K562 (cell line): ENCODE measurements at regions of chr21 and their contacts with region 1.

Region 1: DNA sequence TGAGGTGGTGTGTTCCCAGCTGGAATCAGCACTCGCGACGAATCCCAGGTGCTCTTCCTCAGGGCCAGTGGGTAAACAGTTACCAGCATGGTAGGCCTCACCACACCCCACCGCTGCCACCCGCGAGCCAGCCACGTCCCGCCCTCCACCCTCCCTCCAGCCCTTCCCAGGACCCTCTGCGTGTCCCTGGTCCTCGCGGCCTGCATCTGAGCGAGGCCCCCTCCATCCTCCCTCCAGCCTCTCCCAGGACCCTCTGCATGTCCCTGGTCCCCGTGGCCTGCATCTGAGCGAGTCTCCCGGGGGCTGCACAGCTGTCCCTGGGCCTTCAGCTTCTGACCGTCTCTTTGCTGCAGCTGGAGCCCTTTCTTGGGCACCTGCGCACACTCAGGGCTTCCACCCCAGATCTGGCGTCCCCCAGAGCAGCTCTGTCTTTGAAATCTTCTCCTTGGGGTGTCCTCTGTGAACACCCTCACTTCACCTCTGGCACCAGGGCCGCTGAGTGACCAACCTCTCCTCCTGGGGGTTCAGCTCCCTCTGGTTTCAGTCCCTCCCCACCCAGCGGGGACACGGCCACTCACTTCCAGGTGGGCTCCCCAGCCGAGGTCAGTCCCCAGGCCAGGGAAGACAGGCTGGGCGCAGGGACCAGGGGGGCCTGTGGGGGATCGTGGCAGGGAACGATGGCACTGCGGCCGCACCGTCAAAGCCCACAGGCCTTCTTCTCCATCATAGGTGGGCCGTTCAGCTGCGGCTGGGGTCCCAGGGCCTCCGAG is 57.8 kb upstream of the COL6A2 start:
- DNase-seq: no peak
- ATAC-seq: no peak
- H3K4me3 ChIP-seq: no peak overlapping the region
- H3K27ac ChIP-seq: no peak overlapping the region
- H3K4me1 ChIP-seq: peaks cover 0 to 49% of the 10 kb centered on the region in 2 experiments; a peak in 2 of 5 replicates
- H3K27me3 ChIP-seq: peaks cover 18 to 48% of the 10 kb centered on the region in 2 experiments; a peak in 4 of 5 replicates
- CTCF ChIP-seq: no peak
- EP300 ChIP-seq: no peak
- POLR2A ChIP-seq: no peak
- RAD21 ChIP-seq: no peak

Region 2: GRCh38 chr21:46029186-46029924 is 10.7 kb before region 1 on chr21:
- CTCF ChIA-PET with region 1: no interaction called
- POLR2A ChIA-PET with region 1: interaction called, 19 read pairs
- in situ Hi-C with region 1: no loop called
- intact Hi-C with region 1: no loop called
- DNase-seq: no peak
- ATAC-seq: no peak
- H3K4me3 ChIP-seq: no peak overlapping the region
- H3K27ac ChIP-seq: no peak overlapping the region
- H3K4me1 ChIP-seq: peaks cover 0 to 6% of the 10 kb centered on the region in 2 experiments; a peak in 2 of 5 replicates
- H3K27me3 ChIP-seq: no peaks in the 10 kb centered on the region
- CTCF ChIP-seq: no peak
- EP300 ChIP-seq: no peak
- POLR2A ChIP-seq: no peak
- RAD21 ChIP-seq: no peak

Region 3: DNA sequence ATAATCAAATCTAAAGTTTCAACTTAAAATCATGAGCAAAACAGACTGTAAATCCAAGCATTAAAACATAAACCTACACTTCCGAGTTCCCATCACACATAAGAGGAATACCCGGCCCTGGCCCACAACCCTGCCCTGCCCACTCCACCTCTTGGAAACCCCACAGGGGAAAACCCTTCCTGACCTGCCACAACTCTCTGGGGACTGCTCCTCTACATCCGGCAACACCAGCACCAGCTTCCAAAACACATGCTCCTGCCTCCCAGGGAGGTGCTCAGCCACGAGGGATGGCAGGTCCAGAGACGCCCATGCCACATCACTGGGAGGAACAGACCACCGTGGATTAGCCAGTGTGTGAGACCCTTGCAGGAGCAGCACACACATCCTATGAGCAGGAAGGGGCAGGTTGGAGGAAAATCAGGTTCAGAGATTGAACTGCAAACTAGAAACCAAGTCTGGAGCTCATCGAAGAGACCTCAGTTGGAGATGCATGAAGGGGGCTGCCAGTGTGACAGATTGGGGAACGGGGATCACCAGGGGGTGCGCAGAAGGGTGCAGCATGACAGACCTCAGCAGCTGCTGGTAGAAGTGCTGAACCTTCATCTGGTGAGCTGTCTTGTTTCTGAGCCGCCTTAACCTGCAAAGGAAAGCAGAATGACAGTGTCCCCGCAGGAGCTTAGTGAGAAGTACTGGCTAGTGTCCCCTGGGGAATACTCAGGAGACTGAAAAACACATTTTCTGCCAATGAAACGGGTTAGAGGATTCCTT is 214.3 kb after region 1 on chr21:
- CTCF ChIA-PET with region 1: no interaction called
- POLR2A ChIA-PET with region 1: no interaction called
- in situ Hi-C with region 1: no loop called
- intact Hi-C with region 1: no loop called
- DNase-seq: no peak
- ATAC-seq: no peak
- H3K4me3 ChIP-seq: no peak overlapping the region
- H3K27ac ChIP-seq: peak overlapping the region; percentile 64; the same call in 2 of the 3 replicates
- H3K4me1 ChIP-seq: peaks cover 5 to 11% of the 10 kb centered on the region in 2 experiments; a peak in 3 of 5 replicates
- H3K27me3 ChIP-seq: no peaks in the 10 kb centered on the region
- CTCF ChIP-seq: no peak
- EP300 ChIP-seq: no peak
- POLR2A ChIP-seq: no peak
- RAD21 ChIP-seq: no peak